Activated CD4-positive, alpha-beta T cell treated with anti-CD3 and anti-CD28 coated beads for 36 hours (primary cell): ENCODE measurements at regions of chr6 and their contacts with region 1.

Region 1: GRCh38 chr6:63598049-63599036 is 26.1 kb downstream of the LOC128125822 start:
- DNase-seq: peak; percentile 84
- ATAC-seq: peak; percentile 100
- H3K4me3 Mint-ChIP-seq: peak overlapping the region; percentile 73
- H3K27ac Mint-ChIP-seq: peak overlapping the region; percentile 2
- H3K4me1 Mint-ChIP-seq: peaks cover 16% of the 10 kb centered on the region
- H3K27me3 Mint-ChIP-seq: peaks cover 6% of the 10 kb centered on the region

Region 2: DNA sequence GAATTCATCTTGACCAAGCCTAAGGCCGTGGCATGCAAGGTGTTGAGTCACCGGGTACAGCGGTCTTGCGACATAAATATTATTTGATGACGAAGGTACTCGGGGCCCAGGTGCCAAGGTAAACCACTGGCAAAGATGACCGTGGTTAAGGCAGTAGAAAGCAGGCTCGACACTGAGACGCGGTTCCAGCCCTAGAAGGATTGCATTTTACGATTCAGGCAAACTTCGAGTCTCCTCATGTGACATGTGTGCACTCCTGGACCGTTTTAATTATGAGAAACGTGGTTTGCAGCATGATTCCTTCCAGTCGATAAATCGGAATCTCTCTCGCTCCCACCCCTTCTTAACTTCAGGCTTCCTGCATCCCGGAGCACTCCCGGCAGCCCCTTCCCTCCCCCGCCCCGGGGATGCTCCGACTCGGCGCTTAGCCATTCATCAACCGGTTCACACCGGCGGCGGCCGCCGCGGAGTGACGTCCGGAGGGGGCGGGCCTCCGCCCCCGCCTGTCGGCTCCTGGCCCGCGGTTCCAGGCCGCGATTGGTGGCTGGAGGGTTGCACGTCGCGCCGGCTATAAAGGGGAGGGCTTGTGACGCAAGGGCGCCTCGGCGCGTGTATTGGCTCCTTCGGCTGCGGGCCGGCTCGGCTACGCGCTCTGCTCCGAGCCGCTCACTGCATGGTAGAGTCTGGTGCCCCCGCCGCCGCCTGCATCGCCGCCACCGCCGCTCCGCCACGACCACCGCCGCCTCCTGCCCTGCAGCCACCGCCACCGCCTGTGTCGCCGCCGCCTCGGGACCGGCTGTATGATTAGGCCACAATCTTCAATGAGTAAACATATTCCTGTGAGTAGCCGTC is 26.2 kb before region 1 on chr6 and contains the starts of genes LOC128125822 and PTP4A1:
- CTCF ChIA-PET with region 1: interaction called, 17 read pairs
- POLR2A ChIA-PET with region 1: no interaction called
- intact Hi-C with region 1: loop called in 1 of 2 experiments (anchors 2 kb)
- DNase-seq: peak; percentile 98
- ATAC-seq: peak; percentile 93
- H3K4me3 Mint-ChIP-seq: peak within 1 kb of the TSS; percentile 95
- H3K27ac Mint-ChIP-seq: peak within 1 kb of the TSS; percentile 98
- H3K4me1 Mint-ChIP-seq: peaks cover 29% of the 10 kb centered on the region
- H3K27me3 Mint-ChIP-seq: no peaks in the 10 kb centered on the region
- total RNA-seq, gene PTP4A1: 42.6 to 51.9 TPM

Region 3: GRCh38 chr6:63643862-63644261 is 45.5 kb after region 1 on chr6:
- CTCF ChIA-PET with region 1: interaction called, 14 read pairs
- POLR2A ChIA-PET with region 1: no interaction called
- intact Hi-C with region 1: no loop called
- DNase-seq: no peak
- ATAC-seq: no peak
- H3K4me3 Mint-ChIP-seq: no peak overlapping the region
- H3K27ac Mint-ChIP-seq: no peak overlapping the region
- H3K4me1 Mint-ChIP-seq: peaks cover 65% of the 10 kb centered on the region
- H3K27me3 Mint-ChIP-seq: no peaks in the 10 kb centered on the region

Region 4: GRCh38 chr6:63716169-63716568 is 117.8 kb after region 1 on chr6:
- CTCF ChIA-PET with region 1: interaction called, 5 read pairs
- POLR2A ChIA-PET with region 1: no interaction called
- intact Hi-C with region 1: loop called in 1 of 2 experiments (anchors 5 kb)
- DNase-seq: no peak
- ATAC-seq: peak; percentile 36
- H3K4me3 Mint-ChIP-seq: no peak overlapping the region
- H3K27ac Mint-ChIP-seq: no peak overlapping the region
- H3K4me1 Mint-ChIP-seq: no peaks in the 10 kb centered on the region
- H3K27me3 Mint-ChIP-seq: no peaks in the 10 kb centered on the region